ENCODE measurements at regions of chr3 and their contacts with region 1.

Region 1: GRCh38 chr3:143972505-143973255 is 1.1 kb downstream of the DIPK2A start:
- DNase-seq: peak; percentile 56
- H3K4me3 ChIP-seq: peak overlapping the region; percentile 74 to 78
- H3K27ac ChIP-seq: peak overlapping the region; percentile 97 to 98
- H3K4me1 ChIP-seq: no peaks in the 10 kb centered on the region
- H3K27me3 ChIP-seq: no peaks in the 10 kb centered on the region
- CTCF ChIP-seq: peak in 2 of 4 experiments; percentile 49 to 55
- POLR2A ChIP-seq: no peak

Region 2: DNA sequence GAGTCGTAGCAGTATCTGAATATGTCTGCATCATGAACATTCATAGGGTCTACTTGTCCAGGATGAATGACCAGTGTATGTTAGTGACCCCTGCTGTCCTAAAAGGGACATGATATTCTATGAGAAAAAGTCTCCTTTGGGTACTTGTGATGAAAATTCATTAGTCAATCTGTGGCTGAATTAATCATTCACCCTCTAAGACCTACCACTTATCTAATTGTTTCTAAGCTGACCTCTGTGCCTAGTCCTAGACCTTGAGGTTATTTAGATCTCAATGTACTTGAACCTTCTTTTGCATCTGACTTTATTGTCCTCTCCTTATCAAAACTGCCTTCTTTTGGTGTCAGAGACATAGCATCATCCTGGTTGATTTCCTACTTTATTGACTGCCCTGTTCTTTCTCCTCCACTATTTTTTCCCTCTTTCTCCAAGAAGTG is 798.3 kb after region 1 on chr3:
- intact Hi-C with region 1: loop called (anchors 10 kb)
- DNase-seq: no peak
- H3K4me3 ChIP-seq: no peak overlapping the region
- H3K27ac ChIP-seq: no peak overlapping the region
- H3K4me1 ChIP-seq: no peaks in the 10 kb centered on the region
- H3K27me3 ChIP-seq: no peaks in the 10 kb centered on the region
- CTCF ChIP-seq: peak in 2 of 4 experiments; percentile 33 to 41
- POLR2A ChIP-seq: no peak